Activated CD4-positive, alpha-beta T cell treated with anti-CD3 and anti-CD28 coated beads for 36 hours (primary cell): ENCODE measurements at regions of chr1 and their contacts with region 1.

Region 1: GRCh38 chr1:114581335-114582287 is at the start of gene BCAS2:
- DNase-seq: peak; percentile 97
- ATAC-seq: peak; percentile 99
- H3K4me3 Mint-ChIP-seq: peak within 1 kb of the TSS; percentile 97
- H3K27ac Mint-ChIP-seq: peak within 1 kb of the TSS; percentile 98
- H3K4me1 Mint-ChIP-seq: peaks cover 29% of the 10 kb centered on the region
- H3K27me3 Mint-ChIP-seq: peaks cover 1% of the 10 kb centered on the region
- total RNA-seq, gene BCAS2: 54.1 to 54.8 TPM

Region 2: GRCh38 chr1:113811888-113812660 is 769.5 kb before region 1 on chr1 and contains the start of gene RSBN1:
- CTCF ChIA-PET with region 1: no interaction called
- POLR2A ChIA-PET with region 1: no interaction called
- intact Hi-C with region 1: loop called in 1 of 2 experiments (anchors 5 kb)
- DNase-seq: peak; percentile 99
- ATAC-seq: peak; percentile 97
- H3K4me3 Mint-ChIP-seq: peak within 1 kb of the TSS; percentile 97
- H3K27ac Mint-ChIP-seq: peak within 1 kb of the TSS; percentile 97
- H3K4me1 Mint-ChIP-seq: peaks cover 33% of the 10 kb centered on the region
- H3K27me3 Mint-ChIP-seq: no peaks in the 10 kb centered on the region
- total RNA-seq, gene RSBN1: 22.1 to 24.3 TPM

Region 3: GRCh38 chr1:114670083-114671010 is 88.7 kb after region 1 on chr1:
- CTCF ChIA-PET with region 1: no interaction called
- POLR2A ChIA-PET with region 1: no interaction called
- intact Hi-C with region 1: loop called (anchors 1 kb)
- DNase-seq: peak; percentile 93
- ATAC-seq: peak; percentile 97
- H3K4me3 Mint-ChIP-seq: peak overlapping the region; percentile 84
- H3K27ac Mint-ChIP-seq: peak overlapping the region; percentile 63
- H3K4me1 Mint-ChIP-seq: peaks cover 11% of the 10 kb centered on the region
- H3K27me3 Mint-ChIP-seq: peaks cover 15% of the 10 kb centered on the region

Region 4: DNA sequence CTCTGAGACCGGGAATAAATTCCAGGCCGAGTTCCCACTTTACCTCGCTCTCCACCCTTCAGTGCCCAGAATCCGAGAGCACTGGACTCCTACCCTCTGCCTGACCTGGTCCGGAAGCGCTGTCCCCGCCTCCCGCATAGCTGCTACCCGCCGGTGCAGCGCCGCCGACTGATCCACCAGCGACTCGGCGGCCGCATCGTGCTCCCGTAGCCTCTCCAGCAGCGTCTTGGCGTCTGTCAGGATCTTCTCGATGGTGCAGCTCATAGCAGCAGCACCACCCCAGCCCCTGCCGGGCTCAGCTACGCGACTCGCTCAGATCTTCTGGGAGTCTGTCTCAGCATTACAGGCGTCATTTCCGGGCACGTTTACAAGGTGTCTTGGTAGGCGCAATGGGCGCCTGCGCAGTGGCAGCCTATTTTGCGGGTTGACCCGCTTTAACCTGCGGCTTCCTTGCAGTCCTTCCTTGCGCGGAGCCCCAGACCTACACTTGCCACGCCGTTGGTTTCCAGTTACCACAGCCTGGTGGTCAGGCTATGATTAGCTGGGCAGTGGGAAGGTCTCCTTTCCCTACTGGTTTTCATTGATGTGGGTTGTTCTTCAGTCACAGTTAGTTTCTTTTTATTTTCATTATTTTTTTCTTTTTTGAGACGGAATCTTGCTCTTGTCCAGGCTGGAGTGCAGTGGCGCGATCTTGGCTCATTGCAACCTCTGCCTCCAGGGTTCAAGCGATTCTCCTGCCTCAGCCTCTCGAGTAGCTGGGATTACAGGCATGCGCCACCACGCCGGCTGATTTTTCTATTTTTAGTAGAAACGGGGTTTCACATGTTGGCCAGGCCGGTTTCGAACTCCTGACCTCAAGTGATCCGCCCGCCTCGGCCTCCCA is 199.0 kb after region 1 on chr1 and contains the start of gene SIKE1:
- CTCF ChIA-PET with region 1: no interaction called
- POLR2A ChIA-PET with region 1: no interaction called
- intact Hi-C with region 1: loop called in 1 of 2 experiments (anchors 1 kb)
- DNase-seq: peak; percentile 96
- ATAC-seq: peak; percentile 100
- H3K4me3 Mint-ChIP-seq: peak within 1 kb of the TSS; percentile 100
- H3K27ac Mint-ChIP-seq: peak within 1 kb of the TSS; percentile 97
- H3K4me1 Mint-ChIP-seq: peaks cover 21% of the 10 kb centered on the region
- H3K27me3 Mint-ChIP-seq: no peaks in the 10 kb centered on the region
- total RNA-seq, gene SIKE1: 56.9 to 67.2 TPM

Region 5: DNA sequence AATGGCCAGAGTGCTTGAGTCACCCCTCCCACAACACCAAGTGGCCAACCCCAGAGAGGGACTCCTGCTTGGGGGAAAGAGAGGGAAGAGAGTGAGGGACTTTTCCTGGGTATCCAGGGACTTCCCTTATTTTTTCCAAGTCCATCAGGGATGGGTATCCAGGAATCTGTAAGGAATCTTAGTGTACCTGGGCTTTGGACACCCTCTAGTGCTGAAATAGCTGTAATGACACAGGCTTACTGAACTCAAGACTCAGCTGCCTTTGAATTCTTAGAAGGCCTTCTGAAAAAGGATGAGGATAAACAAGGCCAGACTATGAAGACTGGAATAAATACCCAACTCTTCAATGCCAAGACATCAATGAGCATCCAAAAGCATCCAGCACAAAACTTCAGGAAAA is 460.0 kb after region 1 on chr1:
- CTCF ChIA-PET with region 1: no interaction called
- POLR2A ChIA-PET with region 1: no interaction called
- intact Hi-C with region 1: no loop called
- DNase-seq: no peak
- ATAC-seq: no peak
- H3K4me3 Mint-ChIP-seq: no peak overlapping the region
- H3K27ac Mint-ChIP-seq: no peak overlapping the region
- H3K4me1 Mint-ChIP-seq: no peaks in the 10 kb centered on the region
- H3K27me3 Mint-ChIP-seq: no peaks in the 10 kb centered on the region

Region 6: DNA sequence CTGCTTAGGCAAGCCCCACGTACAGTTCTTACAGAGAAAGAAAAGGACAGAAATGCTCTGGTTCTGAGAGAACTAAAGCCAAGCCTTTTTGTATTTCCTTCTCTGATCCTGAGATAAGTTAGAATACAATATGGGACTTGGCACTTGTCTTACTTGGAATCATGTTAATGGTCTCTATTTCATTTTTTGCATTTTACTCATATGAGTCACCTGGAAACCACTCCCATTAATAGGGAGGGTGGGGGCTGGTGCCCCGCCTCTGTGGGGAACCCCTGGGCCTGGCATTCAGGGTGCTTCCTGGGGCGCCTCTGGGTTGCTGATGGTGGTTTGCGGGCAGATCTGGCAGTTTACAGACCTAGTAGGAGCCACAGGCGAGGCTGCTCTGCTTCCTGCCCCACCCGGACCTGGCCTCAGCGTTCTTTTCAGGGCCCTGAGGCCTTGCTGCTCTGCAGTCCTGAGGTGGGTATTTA is 481.0 kb after region 1 on chr1:
- CTCF ChIA-PET with region 1: no interaction called
- POLR2A ChIA-PET with region 1: no interaction called
- intact Hi-C with region 1: loop called in 1 of 2 experiments (anchors 5 kb)
- DNase-seq: peak; percentile 93
- ATAC-seq: peak; percentile 88
- H3K4me3 Mint-ChIP-seq: peak overlapping the region; percentile 23
- H3K27ac Mint-ChIP-seq: peak overlapping the region; percentile 75
- H3K4me1 Mint-ChIP-seq: peaks cover 40% of the 10 kb centered on the region
- H3K27me3 Mint-ChIP-seq: no peaks in the 10 kb centered on the region

Region 7: DNA sequence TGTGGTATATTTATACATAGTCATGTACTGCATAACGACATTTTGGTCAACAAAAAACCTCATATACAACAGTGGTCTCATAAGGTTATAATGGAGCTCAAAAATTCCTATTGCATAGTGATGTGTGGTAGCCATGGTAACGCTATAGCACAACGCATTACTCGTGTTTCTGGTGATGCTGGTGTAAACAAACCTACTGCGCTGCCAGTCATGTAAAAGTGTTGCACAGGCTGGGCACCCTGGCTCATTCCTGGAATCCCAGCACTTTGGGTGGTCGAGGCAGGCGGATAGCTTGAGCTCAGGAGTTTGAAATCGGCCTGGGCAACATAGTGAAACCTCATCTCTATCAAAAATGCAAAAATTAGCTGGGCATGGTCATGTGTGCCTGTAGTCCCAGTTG is 1312.0 kb after region 1 on chr1:
- CTCF ChIA-PET with region 1: no interaction called
- POLR2A ChIA-PET with region 1: no interaction called
- intact Hi-C with region 1: no loop called
- DNase-seq: no peak
- ATAC-seq: no peak
- H3K4me3 Mint-ChIP-seq: no peak overlapping the region
- H3K27ac Mint-ChIP-seq: no peak overlapping the region
- H3K4me1 Mint-ChIP-seq: no peaks in the 10 kb centered on the region
- H3K27me3 Mint-ChIP-seq: peaks cover 5% of the 10 kb centered on the region